ENCODE measurements at regions of chr11 and their contacts with region 1.

Region 1: GRCh38 chr11:78564490-78565467 is 9.9 kb downstream of the NARS2 start:
- DNase-seq: no peak
- H3K4me3 ChIP-seq: no peak overlapping the region
- H3K27ac ChIP-seq: no peak overlapping the region
- H3K4me1 ChIP-seq: peaks cover 32% of the 10 kb centered on the region
- H3K27me3 ChIP-seq: no peaks in the 10 kb centered on the region
- CTCF ChIP-seq: peak; percentile 79

Region 2: GRCh38 chr11:78228467-78228866 is 336.3 kb before region 1 on chr11:
- intact Hi-C with region 1: loop called (anchors 10 kb)
- DNase-seq: no peak
- H3K4me3 ChIP-seq: no peak overlapping the region
- H3K27ac ChIP-seq: no peak overlapping the region
- H3K4me1 ChIP-seq: peaks cover 49% of the 10 kb centered on the region
- H3K27me3 ChIP-seq: no peaks in the 10 kb centered on the region
- CTCF ChIP-seq: peak; percentile 75

Region 3: DNA sequence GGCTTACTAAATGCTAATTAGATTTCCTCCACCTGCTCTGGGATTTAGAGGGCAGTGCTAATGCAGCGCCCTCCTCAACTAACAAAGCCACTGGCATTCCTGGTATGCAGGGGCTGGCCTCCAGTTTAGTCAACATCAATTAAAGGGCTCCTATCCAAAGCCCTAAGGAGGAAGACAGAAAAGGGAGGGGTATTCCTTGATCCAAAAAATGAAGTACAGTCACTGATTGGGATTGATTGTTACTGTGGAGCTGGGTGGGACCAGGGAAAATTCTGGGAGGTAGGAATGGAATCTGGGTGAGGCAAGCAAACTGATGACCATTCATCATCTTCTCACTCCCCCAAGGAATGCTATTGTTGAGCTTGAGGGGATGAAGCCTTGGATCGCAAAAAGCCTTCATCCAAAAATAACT is 199.4 kb before region 1 on chr11:
- intact Hi-C with region 1: no loop called
- DNase-seq: no peak
- H3K4me3 ChIP-seq: no peak overlapping the region
- H3K27ac ChIP-seq: peak overlapping the region; percentile 74
- H3K4me1 ChIP-seq: peaks cover 28% of the 10 kb centered on the region
- H3K27me3 ChIP-seq: no peaks in the 10 kb centered on the region
- CTCF ChIP-seq: no peak

Region 4: DNA sequence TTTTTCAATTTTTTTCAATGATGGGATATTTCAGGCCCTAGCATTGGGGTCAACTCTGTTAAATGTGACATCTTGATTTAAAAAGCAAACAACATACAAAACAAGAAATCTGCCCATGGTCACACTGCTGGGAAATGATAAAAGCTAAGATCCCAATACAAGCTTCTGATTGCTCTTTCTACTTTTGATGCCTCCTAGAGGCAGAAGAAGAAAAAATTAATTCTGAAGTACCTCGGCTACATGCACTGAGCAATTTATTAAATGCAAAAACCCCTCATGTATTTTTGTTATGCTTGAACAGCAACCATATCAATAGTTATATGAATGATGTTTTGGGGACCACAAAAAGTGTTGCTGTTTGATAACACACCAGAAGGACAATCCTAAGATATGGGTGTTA is 352.0 kb after region 1 on chr11:
- intact Hi-C with region 1: no loop called
- DNase-seq: no peak
- H3K4me3 ChIP-seq: no peak overlapping the region
- H3K27ac ChIP-seq: no peak overlapping the region
- H3K4me1 ChIP-seq: no peaks in the 10 kb centered on the region
- H3K27me3 ChIP-seq: peaks cover 53% of the 10 kb centered on the region
- CTCF ChIP-seq: no peak